HEK293 (cell line): ENCODE measurements at regions of chr6 and their contacts with region 1.

Region 1: GRCh38 chr6:27761391-27761790 is 150.8 kb downstream of the OR2B2 start:
- H3K4me3 ChIP-seq: no peak overlapping the region
- H3K27ac ChIP-seq: no peak overlapping the region
- H3K4me1 ChIP-seq: no peaks in the 10 kb centered on the region
- CTCF ChIP-seq: no peak

Region 2: GRCh38 chr6:27374824-27375612 is 386.4 kb before region 1 on chr6:
- CTCF ChIA-PET with region 1: no interaction called
- POLR2A ChIA-PET with region 1: interaction called, 12 read pairs
- H3K4me3 ChIP-seq: peak overlapping the region; percentile 73
- H3K27ac ChIP-seq: peak overlapping the region; percentile 10; the same call in 1 of the 2 replicates
- H3K4me1 ChIP-seq: no peaks in the 10 kb centered on the region
- CTCF ChIP-seq: no peak

Region 3: DNA sequence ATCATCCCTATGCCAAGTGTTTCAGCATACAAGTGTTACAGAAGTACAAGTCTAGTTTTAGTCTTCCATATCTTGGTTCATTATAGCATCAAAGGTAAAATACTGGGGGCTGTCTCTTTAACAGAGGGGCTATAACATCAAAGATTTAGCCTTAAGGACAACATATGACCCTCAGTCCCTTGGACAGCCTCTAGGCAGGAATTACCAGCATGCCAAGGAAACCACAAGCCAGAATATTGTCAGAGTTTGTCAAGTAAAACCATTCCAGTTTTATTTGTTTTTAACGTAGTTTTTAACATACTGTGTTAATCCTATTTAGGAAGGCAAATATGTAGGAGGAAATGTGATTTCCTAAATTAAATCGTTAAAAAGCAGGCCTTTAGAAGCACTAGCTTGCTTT is 398.8 kb after region 1 on chr6:
- CTCF ChIA-PET with region 1: no interaction called
- POLR2A ChIA-PET with region 1: no interaction called
- H3K4me3 ChIP-seq: no peak overlapping the region
- H3K27ac ChIP-seq: no peak overlapping the region
- H3K4me1 ChIP-seq: peaks cover 3% of the 10 kb centered on the region; the same call in 1 of the 2 replicates
- CTCF ChIP-seq: no peak